AG04450 (cell line): ENCODE measurements at regions of chr14 and their contacts with region 1.

Region 1: GRCh38 chr14:75654127-75654732 is 6.4 kb downstream of the ERG28 start:
- DNase-seq: no peak
- H3K4me3 ChIP-seq: no peak overlapping the region
- H3K27ac ChIP-seq: no peak overlapping the region
- H3K27me3 ChIP-seq: no peaks in the 10 kb centered on the region
- CTCF ChIP-seq: peak; percentile 99

Region 2: DNA sequence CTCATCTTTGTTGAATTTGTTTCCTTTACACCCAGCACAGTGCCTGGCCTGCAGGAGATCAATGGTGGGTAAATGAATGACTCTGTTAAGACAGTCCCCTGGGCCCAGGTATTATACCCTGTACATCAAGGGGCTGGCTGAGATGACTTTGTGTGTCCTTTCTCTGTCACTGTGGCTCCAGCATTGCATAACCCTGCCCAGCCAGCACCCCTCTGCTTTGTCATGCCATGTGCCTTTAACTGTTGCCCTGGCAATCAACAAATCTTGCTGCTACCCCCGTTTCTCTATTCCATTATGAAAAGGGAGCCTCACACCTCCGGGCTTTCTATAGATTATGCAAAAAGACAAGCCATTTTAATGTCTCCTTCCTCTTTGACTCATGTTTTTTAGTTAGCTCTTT is 83.4 kb before region 1 on chr14:
- CTCF ChIA-PET with region 1: interaction called, 411 read pairs
- POLR2A ChIA-PET with region 1: no interaction called
- DNase-seq: no peak
- H3K4me3 ChIP-seq: no peak overlapping the region
- H3K27ac ChIP-seq: no peak overlapping the region
- H3K27me3 ChIP-seq: peaks cover 37% of the 10 kb centered on the region
- CTCF ChIP-seq: no peak

Region 3: DNA sequence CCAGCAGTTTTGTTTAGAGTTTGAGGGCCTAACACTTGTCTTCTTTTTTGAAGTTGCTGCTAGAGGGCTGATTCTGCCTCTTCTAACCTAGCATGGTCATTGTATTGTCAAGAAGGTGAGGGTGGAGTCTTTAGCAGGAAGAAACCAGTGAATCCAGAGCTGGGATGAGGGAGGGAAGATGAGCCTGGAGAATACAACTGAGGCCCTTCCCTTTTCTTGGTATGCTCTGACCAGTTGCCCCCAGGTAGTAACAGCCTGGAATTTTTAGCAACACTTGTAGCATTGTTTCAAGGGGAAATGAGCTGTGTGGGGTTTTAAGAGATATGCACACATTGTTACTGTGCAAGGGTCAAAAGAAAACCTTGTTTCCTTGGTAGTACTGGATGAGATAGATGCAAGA is 66.8 kb before region 1 on chr14:
- CTCF ChIA-PET with region 1: no interaction called
- POLR2A ChIA-PET with region 1: no interaction called
- DNase-seq: no peak
- H3K4me3 ChIP-seq: no peak overlapping the region
- H3K27ac ChIP-seq: no peak overlapping the region
- H3K27me3 ChIP-seq: peaks cover 8% of the 10 kb centered on the region
- CTCF ChIP-seq: no peak

Region 4: DNA sequence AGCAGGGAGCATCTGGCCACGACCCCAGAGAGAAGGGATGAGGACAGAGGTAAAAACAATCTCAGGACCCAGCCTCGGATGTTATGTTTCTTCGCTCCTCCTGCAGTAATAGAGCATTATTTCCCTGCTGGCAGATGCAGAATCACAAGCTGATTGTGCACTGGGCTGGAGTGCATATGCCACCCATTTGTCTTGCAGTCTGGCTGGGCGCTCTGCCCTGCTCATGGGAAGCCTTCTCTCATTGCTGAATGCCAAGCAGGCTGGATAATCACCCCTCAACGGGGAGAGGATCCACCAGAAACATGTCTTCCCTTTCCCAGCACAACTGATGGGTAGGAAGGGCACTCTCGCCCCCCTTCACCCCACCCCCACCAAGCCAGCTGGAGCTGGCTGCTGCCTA is 1098.5 kb after region 1 on chr14:
- CTCF ChIA-PET with region 1: no interaction called
- POLR2A ChIA-PET with region 1: no interaction called
- DNase-seq: no peak
- H3K4me3 ChIP-seq: no peak overlapping the region
- H3K27ac ChIP-seq: no peak overlapping the region
- H3K27me3 ChIP-seq: peaks cover 5% of the 10 kb centered on the region
- CTCF ChIP-seq: no peak